OCI-LY7 (cell line): ENCODE measurements at regions of chr16 and their contacts with region 1.

Region 1: GRCh38 chr16:71723537-71724319 is 773 bp downstream of the PHLPP2 start:
- DNase-seq: peak; percentile 88
- H3K4me3 ChIP-seq: peak overlapping the region; percentile 94
- H3K27ac ChIP-seq: peak overlapping the region; percentile 66
- H3K4me1 ChIP-seq: peaks cover 52% of the 10 kb centered on the region
- CTCF ChIP-seq: peak; percentile 28; the same call in 1 of the 2 replicates

Region 2: GRCh38 chr16:71707199-71707598 is 16.5 kb before region 1 on chr16:
- CTCF ChIA-PET with region 1: interaction called, 3 read pairs
- POLR2A ChIA-PET with region 1: interaction called, 7 read pairs
- intact Hi-C with region 1: loop called (anchors 2 kb)
- DNase-seq: no peak
- H3K4me3 ChIP-seq: no peak overlapping the region
- H3K27ac ChIP-seq: peak overlapping the region; percentile 23
- H3K4me1 ChIP-seq: peaks cover 24% of the 10 kb centered on the region
- CTCF ChIP-seq: no peak

Region 3: GRCh38 chr16:71808593-71809459 is 85.1 kb after region 1 on chr16 and contains the start of gene AP1G1:
- CTCF ChIA-PET with region 1: no interaction called
- POLR2A ChIA-PET with region 1: interaction called, 3 read pairs
- intact Hi-C with region 1: loop called (anchors 5 kb)
- DNase-seq: peak; percentile 99
- H3K4me3 ChIP-seq: peak within 1 kb of the TSS; percentile 98
- H3K27ac ChIP-seq: peak within 1 kb of the TSS; percentile 85
- H3K4me1 ChIP-seq: peaks cover 23% of the 10 kb centered on the region
- CTCF ChIP-seq: no peak
- total RNA-seq, gene AP1G1: 57.3 and 57.9 TPM in 2 replicates